Aorta (tissue), 5 donors: ENCODE measurements at regions of chr12 and their contacts with region 1.

Region 1: GRCh38 chr12:123232807-123233543 is at the starts of genes MPHOSPH9 and MTRFR:
- DNase-seq: peak; percentile 99
- ATAC-seq: peak; percentile 100
- H3K4me3 ChIP-seq: peak within 1 kb of the TSS; percentile 46 to 77
- H3K27ac ChIP-seq: peak within 1 kb of the TSS in 1 of 2 donors; percentile 80
- H3K4me1 ChIP-seq: no peaks in the 10 kb centered on the region
- H3K27me3 ChIP-seq: no peaks in the 10 kb centered on the region
- total RNA-seq, gene MPHOSPH9: 13.4 to 25.1 TPM
- total RNA-seq, gene MTRFR: 8.6 to 12.1 TPM

Region 2: DNA sequence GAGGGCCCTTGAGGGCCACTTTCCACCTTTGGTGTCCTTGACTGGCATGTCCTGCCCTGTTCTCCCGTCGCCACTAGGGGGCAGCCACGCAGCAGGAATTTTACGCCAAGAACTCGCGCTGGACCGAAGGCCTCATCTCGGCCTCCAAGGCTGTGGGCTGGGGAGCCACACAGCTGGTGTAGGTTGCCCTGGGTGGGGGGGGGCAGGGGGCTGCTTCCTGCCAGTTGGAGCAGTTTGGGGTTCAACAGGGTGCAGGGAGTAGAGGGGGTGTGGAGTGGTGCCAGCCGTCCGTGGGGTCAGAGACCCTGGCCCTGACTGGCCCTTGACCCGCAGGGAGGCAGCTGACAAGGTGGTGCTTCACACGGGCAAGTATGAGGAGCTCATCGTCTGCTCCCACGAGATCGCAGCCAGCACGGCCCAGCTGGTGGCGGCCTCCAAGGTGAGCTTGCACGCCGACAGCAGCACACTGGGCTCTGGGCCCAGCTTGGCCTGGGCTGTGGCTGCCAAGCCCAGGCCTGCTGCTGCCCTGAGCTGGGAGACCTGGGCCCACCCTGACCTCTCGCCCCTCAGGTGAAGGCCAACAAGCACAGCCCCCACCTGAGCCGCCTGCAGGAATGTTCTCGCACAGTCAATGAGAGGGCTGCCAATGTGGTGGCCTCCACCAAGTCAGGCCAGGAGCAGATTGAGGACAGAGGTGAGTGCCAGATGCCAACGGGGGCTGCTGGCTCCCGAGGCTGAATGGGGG is 372.5 kb before region 1 on chr12:
- intact Hi-C with region 1: loop called in 1 of 2 experiments (anchors 10 kb)
- DNase-seq: peak; percentile 91 to 96
- ATAC-seq: peak; percentile 86
- H3K4me3 ChIP-seq: no peak overlapping the region
- H3K27ac ChIP-seq: no peak overlapping the region
- H3K4me1 ChIP-seq: no peaks in the 10 kb centered on the region
- H3K27me3 ChIP-seq: no peaks in the 10 kb centered on the region

Region 3: DNA sequence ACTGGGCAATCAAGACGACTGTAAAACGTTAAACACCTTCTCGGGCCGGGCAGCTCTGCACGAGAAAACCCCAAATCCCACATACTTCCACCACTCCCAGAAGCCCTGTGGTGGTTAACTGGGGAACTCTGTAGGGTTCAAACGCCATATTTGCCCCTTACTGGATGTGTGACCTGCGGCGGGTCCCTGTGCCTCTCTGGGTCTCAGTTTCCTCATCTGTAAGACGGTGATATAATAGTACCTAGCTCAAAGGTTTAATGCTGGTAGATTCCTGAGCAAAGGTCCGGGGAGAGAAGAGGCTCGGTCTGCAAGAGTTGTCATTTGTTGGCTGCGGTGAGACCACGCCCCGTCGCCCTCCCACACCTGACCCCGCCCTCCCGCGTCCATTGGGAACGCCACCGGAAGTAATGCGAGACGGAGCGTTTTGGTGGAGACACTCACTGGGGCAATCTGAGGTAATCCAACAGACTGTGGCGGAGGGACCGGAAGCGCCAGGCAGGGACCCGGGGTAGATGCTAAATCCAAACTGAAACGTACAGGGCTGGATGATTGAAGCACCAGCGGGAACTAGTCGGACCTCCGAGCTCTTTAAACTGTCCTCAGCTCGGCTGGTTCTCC is 258.6 kb before region 1 on chr12:
- intact Hi-C with region 1: loop called (anchors 2 to 5 kb)
- DNase-seq: peak; percentile 99
- ATAC-seq: peak; percentile 97
- H3K4me3 ChIP-seq: peak overlapping the region; percentile 54 to 77
- H3K27ac ChIP-seq: peak overlapping the region; percentile 76 to 93
- H3K4me1 ChIP-seq: no peaks in the 10 kb centered on the region
- H3K27me3 ChIP-seq: no peaks in the 10 kb centered on the region

Region 4: GRCh38 chr12:123043536-123044001 is 189.4 kb before region 1 on chr12:
- intact Hi-C with region 1: loop called (anchors 1 kb)
- DNase-seq: peak; percentile 91 to 96
- ATAC-seq: peak; percentile 91
- H3K4me3 ChIP-seq: no peak overlapping the region
- H3K27ac ChIP-seq: peak overlapping the region in 1 of 2 donors; percentile 43
- H3K4me1 ChIP-seq: no peaks in the 10 kb centered on the region
- H3K27me3 ChIP-seq: no peaks in the 10 kb centered on the region

Region 5: DNA sequence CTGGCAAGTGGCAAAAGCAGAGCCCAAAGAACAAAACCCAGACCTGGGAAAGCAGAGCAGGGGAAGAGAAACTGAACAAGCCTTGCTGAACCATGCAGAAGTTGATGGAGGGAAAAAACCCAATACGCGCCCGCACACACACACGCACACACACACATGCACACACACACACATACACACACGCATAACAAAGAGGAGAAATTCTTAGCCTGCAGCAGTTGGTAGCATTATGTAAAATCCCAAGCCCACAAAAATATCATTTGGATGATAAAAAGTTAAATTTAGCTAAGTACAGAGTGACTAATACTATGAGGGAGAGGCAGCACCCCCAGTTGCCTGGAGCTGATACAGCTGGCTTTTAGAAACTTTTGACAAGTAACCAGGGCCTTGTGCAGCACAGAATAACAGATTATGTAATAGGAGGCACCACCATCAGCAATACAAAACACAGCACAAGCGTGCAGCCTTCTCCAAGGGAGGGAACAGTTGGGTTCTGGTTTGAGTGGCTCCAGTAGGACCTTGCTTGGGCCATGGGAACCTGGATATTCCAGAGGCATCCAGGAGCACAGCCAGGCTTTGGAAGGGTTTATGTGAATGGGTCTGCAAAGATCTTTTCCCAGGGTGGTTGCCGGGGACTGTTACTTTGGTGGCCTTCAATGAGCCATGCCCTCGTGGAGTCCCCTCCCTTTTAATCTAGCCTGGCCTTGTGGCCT is 117.4 kb before region 1 on chr12:
- intact Hi-C with region 1: no loop called
- DNase-seq: peak; percentile 79 to 83
- ATAC-seq: peak; percentile 93
- H3K4me3 ChIP-seq: no peak overlapping the region
- H3K27ac ChIP-seq: peak overlapping the region in 1 of 2 donors; percentile 69
- H3K4me1 ChIP-seq: peaks cover 3 to 8% of the 10 kb centered on the region in 2 donors
- H3K27me3 ChIP-seq: no peaks in the 10 kb centered on the region

Region 6: DNA sequence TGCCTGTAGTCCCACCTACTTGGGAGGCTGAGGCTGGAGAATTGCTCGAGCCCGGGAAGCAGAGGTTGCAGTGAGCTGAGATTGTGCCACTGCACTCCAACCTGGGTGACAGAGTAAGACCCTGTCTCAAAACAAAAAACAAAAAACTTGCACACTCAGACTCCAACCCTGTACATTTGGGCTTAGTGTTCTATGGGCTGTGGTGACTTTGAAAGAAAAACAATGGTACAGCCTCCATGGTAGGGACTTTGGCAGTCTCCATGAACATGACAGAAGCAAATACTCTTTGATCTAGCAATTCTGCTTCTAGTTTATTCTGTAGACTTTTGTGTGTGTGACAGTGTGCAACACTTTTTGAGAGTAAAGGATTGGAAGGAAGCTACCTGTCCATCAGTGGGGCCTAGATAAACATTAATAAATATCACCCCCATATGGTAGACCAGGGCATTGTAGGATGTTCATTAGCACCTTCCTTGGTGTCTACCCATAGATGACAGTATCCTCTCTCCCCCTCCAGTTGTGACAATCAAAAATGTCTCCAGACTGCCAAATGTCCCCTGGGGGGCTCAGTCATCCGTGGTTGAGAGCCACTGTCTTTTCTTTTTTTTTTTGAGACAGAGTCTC is 235.7 kb after region 1 on chr12:
- intact Hi-C with region 1: no loop called
- DNase-seq: no peak
- ATAC-seq: no peak
- H3K4me3 ChIP-seq: no peak overlapping the region
- H3K27ac ChIP-seq: no peak overlapping the region
- H3K4me1 ChIP-seq: peaks cover 0 to 3% of the 10 kb centered on the region in 2 donors
- H3K27me3 ChIP-seq: no peaks in the 10 kb centered on the region